BJ (cell line): ENCODE measurements at regions of chr19 and their contacts with region 1.

Region 1: GRCh38 chr19:6260912-6261650 is 18.7 kb downstream of the MLLT1 start:
- DNase-seq: no peak
- H3K4me3 ChIP-seq: no peak overlapping the region
- H3K27me3 ChIP-seq: no peaks in the 10 kb centered on the region
- CTCF ChIP-seq: peak; percentile 66

Region 2: DNA sequence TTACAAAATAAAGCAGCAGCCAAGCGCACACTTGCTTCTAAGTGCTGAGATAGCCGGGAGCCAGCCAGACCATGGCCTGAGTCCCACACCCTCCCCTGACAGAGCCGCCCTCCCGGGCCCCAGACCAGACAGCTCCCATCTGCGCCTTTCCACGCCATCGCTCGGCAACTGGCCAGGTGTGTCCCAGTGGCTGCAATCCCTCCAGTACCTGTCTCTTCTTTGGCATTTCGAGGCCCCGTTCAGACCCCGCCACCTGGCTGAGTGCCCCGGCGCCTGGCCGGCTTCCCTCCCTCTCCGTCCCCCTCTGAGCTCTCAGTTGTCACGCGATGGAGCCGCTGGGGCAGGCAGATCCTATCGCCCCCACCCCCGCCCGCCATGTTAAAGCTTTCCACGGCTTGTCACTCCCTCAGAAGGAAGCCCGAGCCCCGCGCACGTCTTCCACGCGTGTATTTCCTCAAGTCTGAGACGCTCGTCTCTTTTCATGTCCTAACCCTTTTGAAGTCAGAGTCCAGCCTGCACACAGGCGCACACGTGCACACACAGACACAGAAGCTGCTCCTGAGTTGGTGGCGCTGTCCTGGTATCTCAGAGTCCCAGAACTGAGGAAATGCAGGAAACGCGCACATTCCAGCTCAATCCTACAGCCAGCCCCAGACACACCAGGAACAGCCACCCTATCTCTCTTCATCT is 10.8 kb after region 1 on chr19:
- CTCF ChIA-PET with region 1: interaction called, 13 read pairs
- POLR2A ChIA-PET with region 1: interaction called, 8 read pairs
- DNase-seq: no peak
- H3K4me3 ChIP-seq: peak overlapping the region; percentile 8; the same call in 1 of the 2 replicates
- H3K27me3 ChIP-seq: no peaks in the 10 kb centered on the region
- CTCF ChIP-seq: peak; percentile 27; the same call in 1 of the 2 replicates